Activated CD8-positive, alpha-beta memory T cell treated with anti-CD3 and anti-CD28 coated beads, Interleukin-2, amount 10 ng/mL, durations not matched to agents 7 days and 5 days (primary cell): ENCODE measurements at regions of chr9 and their contacts with region 1.

Region 1: DNA sequence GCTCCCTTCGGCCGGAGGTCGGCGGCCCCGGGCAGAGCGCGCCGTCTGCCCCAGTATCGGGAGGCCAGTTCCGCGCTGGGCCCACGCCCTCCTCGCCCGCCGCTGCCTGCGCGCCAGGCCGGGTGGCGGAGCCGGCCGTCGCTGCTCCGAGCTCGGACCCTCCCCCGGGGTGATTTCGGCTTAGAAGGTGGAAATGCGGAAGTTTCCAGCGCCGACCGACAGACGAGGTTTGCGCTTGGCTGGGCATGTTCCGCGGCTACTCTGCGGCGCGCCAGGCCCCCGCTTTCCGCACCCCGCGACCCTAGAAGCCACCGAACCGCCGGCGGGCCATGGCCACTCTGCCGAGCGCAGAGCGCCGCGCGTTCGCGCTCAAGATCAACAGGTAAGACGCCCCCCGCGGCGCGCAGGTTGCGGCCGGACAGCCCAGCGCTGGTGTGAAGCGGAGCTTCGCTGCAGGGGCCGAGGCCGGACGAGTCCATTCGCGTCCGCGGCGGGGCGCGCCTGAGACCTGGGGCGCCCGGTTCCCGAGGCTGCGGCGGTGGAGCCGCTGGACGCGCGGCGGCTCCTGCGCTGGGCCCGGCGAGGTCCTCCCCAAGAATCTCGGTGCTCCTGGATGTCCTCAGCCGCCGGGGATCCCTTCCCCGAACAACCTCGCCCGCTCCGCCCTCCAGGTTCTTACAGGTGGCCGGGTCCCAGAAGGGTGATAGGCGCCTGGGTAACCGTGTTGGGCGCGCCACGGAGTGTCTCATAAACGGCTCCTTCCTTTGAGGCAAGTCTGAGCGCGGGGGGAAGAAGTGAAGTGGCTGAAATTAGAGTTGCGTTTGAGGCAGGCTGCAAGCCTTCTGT is at the start of gene DOCK8:
- DNase-seq: peak; percentile 82
- ATAC-seq: peak; percentile 88
- H3K4me3 Mint-ChIP-seq: peak within 1 kb of the TSS; percentile 77
- H3K27ac Mint-ChIP-seq: peak within 1 kb of the TSS; percentile 85
- H3K4me1 Mint-ChIP-seq: peaks cover 41% of the 10 kb centered on the region
- H3K27me3 Mint-ChIP-seq: no peaks in the 10 kb centered on the region
- total RNA-seq, gene DOCK8: 374 to 389 TPM

Region 2: GRCh38 chr9:237858-238345 is 23.0 kb after region 1 on chr9:
- CTCF ChIA-PET with region 1: interaction called, 13 read pairs
- DNase-seq: no peak
- ATAC-seq: peak; percentile 51
- H3K4me3 Mint-ChIP-seq: peak overlapping the region; percentile 51
- H3K27ac Mint-ChIP-seq: peak overlapping the region; percentile 85
- H3K4me1 Mint-ChIP-seq: peaks cover 68% of the 10 kb centered on the region
- H3K27me3 Mint-ChIP-seq: no peaks in the 10 kb centered on the region

Region 3: DNA sequence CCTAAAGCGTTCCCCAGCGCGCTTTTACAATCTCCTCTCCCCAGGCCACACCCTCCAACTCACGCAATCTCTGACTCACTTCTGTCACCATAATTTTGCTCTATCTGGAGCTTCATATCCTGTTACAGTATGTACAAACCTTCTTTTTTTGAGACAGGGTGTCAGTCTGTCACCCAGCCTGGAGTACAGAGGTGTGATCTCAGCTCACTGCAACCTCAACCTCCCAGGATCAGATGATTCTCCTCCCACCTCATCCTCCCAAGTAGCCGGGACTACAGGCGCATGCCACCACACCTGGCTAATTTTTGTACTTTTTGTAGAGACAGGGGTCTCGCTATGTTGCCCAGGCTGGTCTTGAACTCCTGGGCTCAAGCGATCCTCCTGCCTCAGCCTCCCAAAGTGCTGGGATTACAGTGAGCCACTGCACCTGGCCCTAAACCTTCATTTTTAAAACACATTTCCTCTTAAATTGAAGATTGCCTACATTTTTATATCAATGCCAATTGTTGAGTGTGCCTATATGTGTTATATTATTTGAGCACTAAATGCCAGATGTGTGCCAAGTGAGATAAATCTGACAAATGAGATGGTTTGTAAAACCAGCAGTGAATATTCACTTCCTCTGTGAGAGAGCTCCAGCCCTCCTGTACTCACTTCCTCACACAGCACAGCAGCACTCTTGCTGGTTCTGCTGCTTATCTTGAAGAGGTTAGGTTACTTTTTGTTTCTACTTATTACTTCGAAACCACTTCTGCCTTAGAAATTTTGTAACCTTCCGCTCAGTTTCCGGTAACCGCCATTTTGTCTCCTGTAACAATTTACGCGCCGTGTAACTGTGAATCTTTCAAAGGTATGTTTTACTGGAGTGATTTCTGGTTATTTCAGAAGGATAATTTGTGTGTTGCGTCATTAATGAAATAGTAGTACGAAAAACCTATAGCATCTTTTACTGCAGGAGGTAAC is 57.7 kb after region 1 on chr9:
- CTCF ChIA-PET with region 1: interaction called, 57 read pairs
- DNase-seq: peak; percentile 90
- ATAC-seq: peak; percentile 80
- H3K4me3 Mint-ChIP-seq: peak overlapping the region; percentile 97
- H3K27ac Mint-ChIP-seq: peak overlapping the region; percentile 100
- H3K4me1 Mint-ChIP-seq: peaks cover 67% of the 10 kb centered on the region
- H3K27me3 Mint-ChIP-seq: no peaks in the 10 kb centered on the region

Region 4: GRCh38 chr9:278651-279050 is 63.8 kb after region 1 on chr9:
- CTCF ChIA-PET with region 1: interaction called, 57 read pairs
- DNase-seq: peak; percentile 89
- ATAC-seq: peak; percentile 74
- H3K4me3 Mint-ChIP-seq: no peak overlapping the region
- H3K27ac Mint-ChIP-seq: no peak overlapping the region
- H3K4me1 Mint-ChIP-seq: peaks cover 38% of the 10 kb centered on the region
- H3K27me3 Mint-ChIP-seq: no peaks in the 10 kb centered on the region

Region 5: GRCh38 chr9:286071-286740 is 71.3 kb after region 1 on chr9:
- CTCF ChIA-PET with region 1: interaction called, 14 read pairs
- DNase-seq: no peak
- ATAC-seq: no peak
- H3K4me3 Mint-ChIP-seq: no peak overlapping the region
- H3K27ac Mint-ChIP-seq: no peak overlapping the region
- H3K4me1 Mint-ChIP-seq: peaks cover 58% of the 10 kb centered on the region
- H3K27me3 Mint-ChIP-seq: no peaks in the 10 kb centered on the region